CD8-positive, alpha-beta T cell (primary cell): ENCODE measurements at regions of chr6 and their contacts with region 1.

Region 1: GRCh38 chr6:125749173-125749864 is at the start of gene HEY2:
- DNase-seq: peak; percentile 54 to 93 (median 77)
- ATAC-seq: peak; percentile 70
- H3K4me3 ChIP-seq: peak within 1 kb of the TSS; percentile 63 to 80
- H3K4me3 Mint-ChIP-seq: peak within 1 kb of the TSS; percentile 88
- H3K27ac ChIP-seq: peak within 1 kb of the TSS in 1 of 2 experiments; percentile 1
- H3K27ac Mint-ChIP-seq: peak within 1 kb of the TSS; percentile 72
- H3K4me1 ChIP-seq: peaks cover 30% of the 10 kb centered on the region
- H3K4me1 Mint-ChIP-seq: peaks cover 38% of the 10 kb centered on the region
- H3K27me3 ChIP-seq: peaks cover 12 to 14% of the 10 kb centered on the region in 2 experiments
- H3K27me3 Mint-ChIP-seq: peaks cover 57% of the 10 kb centered on the region
- CTCF ChIP-seq: no peak
- total RNA-seq, gene HEY2: 0.11 to 0.33 TPM

Region 2: GRCh38 chr6:125301435-125302391 is 447.6 kb before region 1 on chr6 and contains the start of gene HDDC2:
- CTCF ChIA-PET with region 1: interaction called, 6 read pairs
- POLR2A ChIA-PET with region 1: interaction called, 3 read pairs
- intact Hi-C with region 1: loop called in 1 of 2 experiments (anchors 2 kb)
- DNase-seq: peak in 8 of 9 experiments; percentile 27 to 67 (median 44)
- ATAC-seq: peak; percentile 43
- H3K4me3 ChIP-seq: peak within 1 kb of the TSS; percentile 65 to 70
- H3K4me3 Mint-ChIP-seq: peak within 1 kb of the TSS; percentile 82
- H3K27ac ChIP-seq: peak within 1 kb of the TSS; percentile 58 to 83
- H3K27ac Mint-ChIP-seq: peak within 1 kb of the TSS; percentile 88
- H3K4me1 ChIP-seq: peaks cover 39% of the 10 kb centered on the region
- H3K4me1 Mint-ChIP-seq: peaks cover 57% of the 10 kb centered on the region
- H3K27me3 ChIP-seq: no peaks in the 10 kb centered on the region
- H3K27me3 Mint-ChIP-seq: peaks cover 4% of the 10 kb centered on the region
- CTCF ChIP-seq: no peak
- total RNA-seq, gene HDDC2: 16.2 to 24.9 TPM

Region 3: DNA sequence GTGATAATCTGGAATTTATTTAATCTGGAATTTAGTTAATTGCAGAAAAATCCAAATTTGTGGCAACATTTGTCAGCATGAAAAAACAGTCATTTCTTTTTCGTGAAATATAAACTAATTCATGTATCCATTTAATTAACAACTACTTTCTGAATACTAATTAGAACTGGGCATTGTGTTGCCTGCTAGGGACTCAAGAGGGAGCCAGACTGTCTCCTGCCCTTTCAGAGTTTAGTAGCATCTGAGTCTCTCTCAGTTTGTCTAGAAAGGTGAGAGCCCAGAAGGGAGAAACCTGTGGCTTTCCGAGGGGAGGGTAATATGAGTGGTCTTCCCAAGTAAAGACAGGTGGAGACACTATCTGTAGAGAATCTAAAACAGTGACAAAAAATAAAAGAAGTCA is 236.7 kb before region 1 on chr6:
- CTCF ChIA-PET with region 1: no interaction called
- POLR2A ChIA-PET with region 1: no interaction called
- intact Hi-C with region 1: loop called in 1 of 2 experiments (anchors 5 kb)
- DNase-seq: peak in 2 of 9 experiments; percentile 3 to 8
- ATAC-seq: no peak
- H3K4me3 ChIP-seq: no peak overlapping the region
- H3K4me3 Mint-ChIP-seq: no peak overlapping the region
- H3K27ac ChIP-seq: no peak overlapping the region
- H3K27ac Mint-ChIP-seq: no peak overlapping the region
- H3K4me1 ChIP-seq: no peaks in the 10 kb centered on the region
- H3K4me1 Mint-ChIP-seq: no peaks in the 10 kb centered on the region
- H3K27me3 ChIP-seq: no peaks in the 10 kb centered on the region
- H3K27me3 Mint-ChIP-seq: peaks cover 5% of the 10 kb centered on the region
- CTCF ChIP-seq: no peak